Right cardiac atrium (tissue), 5 donors: ENCODE measurements at regions of chr20 and their contacts with region 1.

Region 1: GRCh38 chr20:57167971-57168706 is 98.3 kb downstream of the BMP7 start:
- DNase-seq: peak in 2 of 3 donors; percentile 56 to 72
- ATAC-seq: peak; percentile 53 to 70
- H3K4me3 ChIP-seq: no peak overlapping the region
- H3K27ac ChIP-seq: peak overlapping the region; percentile 62
- H3K4me1 ChIP-seq: no peaks in the 10 kb centered on the region
- H3K27me3 ChIP-seq: no peaks in the 10 kb centered on the region

Region 2: DNA sequence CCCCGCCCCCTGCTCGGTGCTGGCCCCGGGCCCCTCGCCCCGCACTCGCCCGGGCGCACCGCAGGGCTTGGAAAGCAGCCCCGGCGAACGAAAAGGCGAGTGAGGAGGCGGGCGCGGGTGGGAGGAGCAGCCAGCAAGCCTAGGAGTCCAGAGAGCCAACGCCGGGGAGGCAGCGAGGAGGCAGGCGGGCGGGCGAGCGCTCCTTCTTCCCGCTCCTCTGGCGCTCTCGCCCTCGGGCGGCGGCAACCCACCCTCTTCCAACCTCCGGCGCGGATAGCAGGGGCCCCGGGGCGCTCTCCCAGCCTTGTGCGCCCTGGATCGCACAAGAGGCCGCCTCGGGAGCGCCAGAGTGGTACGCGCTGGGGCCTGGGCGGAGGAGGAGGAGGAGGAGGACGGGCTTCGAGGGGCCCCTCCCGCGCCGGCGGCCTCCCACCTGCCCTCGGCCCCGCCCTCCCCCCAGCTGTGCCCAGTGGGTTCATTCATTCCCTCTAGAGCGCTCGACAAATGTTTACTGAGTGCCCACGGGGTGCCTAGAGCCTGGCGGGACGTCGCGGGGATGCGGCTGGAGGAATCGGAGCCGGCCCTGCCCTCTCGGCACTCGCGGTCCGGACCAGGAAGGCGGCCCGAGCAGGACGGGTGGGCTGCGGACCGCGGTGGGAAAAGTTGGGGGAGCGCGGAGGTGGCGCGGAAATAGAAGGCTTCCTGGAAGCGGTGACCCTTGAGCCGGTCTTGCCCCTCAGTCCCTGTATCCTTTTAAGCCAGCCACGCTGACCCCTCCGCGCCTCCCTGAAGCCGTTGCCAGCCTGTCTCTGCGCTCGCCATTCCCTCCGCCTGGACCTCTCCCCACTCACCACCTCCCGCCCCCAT is 98.4 kb after region 1 on chr20 and contains the start of gene BMP7:
- intact Hi-C with region 1: loop called in 2 of 4 experiments (anchors 10 kb)
- DNase-seq: peak in 2 of 3 donors; percentile 55 to 64
- ATAC-seq: peak; percentile 34 to 44
- H3K4me3 ChIP-seq: peak within 1 kb of the TSS; percentile 40
- H3K27ac ChIP-seq: peak within 1 kb of the TSS; percentile 18
- H3K4me1 ChIP-seq: no peaks in the 10 kb centered on the region
- H3K27me3 ChIP-seq: no peaks in the 10 kb centered on the region
- total RNA-seq, gene BMP7: 29.1 to 39.4 (median 32.3) TPM